ENCODE measurements at regions of chr10 and their contacts with region 1.

Region 1: DNA sequence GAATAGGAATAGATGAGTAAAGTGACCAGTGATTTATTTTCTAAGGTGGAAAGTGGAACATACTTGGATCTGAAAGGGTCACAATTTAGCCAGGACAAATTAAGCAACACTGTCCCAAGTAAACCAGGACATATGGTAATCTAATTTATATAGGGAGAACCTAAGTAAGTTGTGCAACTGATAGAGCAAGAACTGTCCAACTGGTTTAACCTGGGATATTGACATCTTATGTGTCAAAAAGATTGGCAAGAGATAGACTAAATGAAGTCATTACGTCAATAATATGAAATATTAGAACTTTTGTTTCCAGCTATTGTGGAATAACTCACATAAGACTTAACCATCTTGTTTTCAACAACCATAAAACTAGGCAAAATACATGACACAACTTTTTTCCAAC is 168.8 kb upstream of the PLXDC2 start:
- DNase-seq: no peak
- ATAC-seq: no peak
- H3K4me3 ChIP-seq: no peak overlapping the region
- H3K27ac ChIP-seq: no peak overlapping the region
- H3K4me1 ChIP-seq: peaks cover 8% of the 10 kb centered on the region
- H3K27me3 ChIP-seq: no peaks in the 10 kb centered on the region
- CTCF ChIP-seq: no peak
- POLR2A ChIP-seq: no peak
- RAD21 ChIP-seq: no peak

Region 2: DNA sequence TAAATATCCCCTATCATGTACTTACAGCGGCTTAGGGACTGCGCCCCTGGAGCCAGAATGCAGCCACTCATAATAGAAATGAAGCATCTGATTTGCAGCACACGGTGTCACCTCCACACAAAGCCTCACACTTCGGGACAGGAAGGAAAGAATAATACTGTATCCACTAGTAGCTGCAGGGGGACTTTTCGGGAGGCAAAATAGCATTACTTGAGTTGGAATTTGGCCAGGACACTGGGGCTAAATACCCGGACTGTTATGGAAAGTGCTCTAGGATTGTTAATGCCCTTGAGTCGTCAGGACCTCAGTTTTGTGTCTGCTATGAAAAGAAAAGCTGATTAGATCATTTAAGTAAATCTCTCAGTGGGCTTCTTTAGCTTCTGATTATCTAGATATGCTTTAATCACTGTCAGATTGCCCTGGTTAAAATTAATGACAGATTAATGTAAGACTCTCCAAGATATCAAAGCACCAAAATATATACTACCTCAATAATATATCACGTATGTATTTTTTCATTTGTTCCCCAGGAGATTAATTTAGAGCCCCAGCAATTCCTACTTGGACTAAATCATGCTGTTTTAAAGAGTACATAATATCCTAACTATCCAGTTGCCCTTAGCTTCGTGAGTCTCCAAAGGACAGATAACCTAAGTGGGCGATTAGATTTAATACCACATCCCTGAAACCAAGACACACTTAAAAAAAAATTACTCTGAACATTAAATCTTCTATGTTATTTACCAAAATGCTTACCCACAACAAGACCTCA is 1422.6 kb after region 1 on chr10:
- CTCF ChIA-PET with region 1: no interaction called
- POLR2A ChIA-PET with region 1: no interaction called
- dilution Hi-C with region 1: no loop called
- in situ Hi-C with region 1: no loop called
- intact Hi-C with region 1: no loop called
- DNase-seq: no peak
- ATAC-seq: no peak
- H3K4me3 ChIP-seq: no peak overlapping the region
- H3K27ac ChIP-seq: no peak overlapping the region
- H3K4me1 ChIP-seq: no peaks in the 10 kb centered on the region
- H3K27me3 ChIP-seq: no peaks in the 10 kb centered on the region
- CTCF ChIP-seq: no peak
- POLR2A ChIP-seq: no peak
- RAD21 ChIP-seq: no peak

Region 3: GRCh38 chr10:21479570-21480315 is 1832.3 kb after region 1 on chr10:
- CTCF ChIA-PET with region 1: no interaction called
- POLR2A ChIA-PET with region 1: no interaction called
- dilution Hi-C with region 1: no loop called
- in situ Hi-C with region 1: no loop called
- intact Hi-C with region 1: loop called (anchors 5 kb)
- DNase-seq: no peak
- ATAC-seq: no peak
- H3K4me3 ChIP-seq: no peak overlapping the region
- H3K27ac ChIP-seq: no peak overlapping the region
- H3K4me1 ChIP-seq: no peaks in the 10 kb centered on the region
- H3K27me3 ChIP-seq: no peaks in the 10 kb centered on the region
- CTCF ChIP-seq: no peak
- POLR2A ChIP-seq: no peak
- RAD21 ChIP-seq: no peak